H1 (cell line): ENCODE measurements at regions of chr3 and their contacts with region 1.

Region 1: DNA sequence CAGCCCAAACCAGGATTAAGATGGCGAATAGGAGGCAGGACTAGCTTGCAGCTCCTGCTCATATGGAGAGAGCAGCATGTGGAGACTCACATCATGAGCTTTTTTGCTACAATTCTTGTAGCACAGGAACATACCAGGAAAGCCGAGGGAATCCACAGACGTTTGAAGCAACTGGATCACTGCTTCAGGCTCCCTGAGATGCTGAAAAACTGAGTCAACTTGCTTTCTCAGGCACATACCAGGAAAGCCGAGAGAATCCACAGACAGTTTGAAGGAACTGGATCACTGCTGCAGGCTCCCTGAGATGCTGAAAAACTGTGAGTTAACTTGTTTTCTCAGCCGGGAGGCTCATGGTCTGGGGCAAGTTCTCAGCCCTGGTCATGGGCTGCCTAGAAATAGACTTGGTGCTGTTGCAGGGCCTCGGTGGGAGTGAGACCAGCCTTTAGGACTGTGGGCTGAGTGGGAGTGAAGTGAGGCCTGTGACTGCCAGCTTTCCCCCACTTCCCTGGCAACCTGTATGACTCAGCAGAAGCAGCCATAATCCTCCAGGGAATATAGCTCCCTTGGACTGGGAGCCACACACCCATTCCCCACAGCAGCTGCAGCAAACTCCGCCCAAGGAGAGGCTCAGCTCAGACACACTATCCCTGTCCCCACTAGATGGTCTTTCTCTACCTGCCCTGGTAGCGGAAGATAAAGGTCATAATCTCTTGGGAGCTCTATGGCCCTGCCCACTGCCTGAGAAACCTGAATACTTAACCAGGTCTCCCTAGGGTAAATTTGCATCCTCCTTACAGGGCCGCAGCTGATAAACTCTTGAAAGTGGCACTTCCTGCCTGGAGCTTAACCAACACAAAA is 51.9 kb upstream of the PFN2 start:
- DNase-seq: no peak
- H3K4me3 ChIP-seq: no peak overlapping the region
- H3K27ac ChIP-seq: no peak overlapping the region
- H3K4me1 ChIP-seq: peaks cover 0 to 8% (median 4%) of the 10 kb centered on the region in 4 experiments; a peak in 5 of 7 replicates
- H3K27me3 ChIP-seq: no peaks in the 10 kb centered on the region
- CTCF ChIP-seq: no peak
- EP300 ChIP-seq: no peak
- POLR2A ChIP-seq: no peak
- RAD21 ChIP-seq: no peak

Region 2: DNA sequence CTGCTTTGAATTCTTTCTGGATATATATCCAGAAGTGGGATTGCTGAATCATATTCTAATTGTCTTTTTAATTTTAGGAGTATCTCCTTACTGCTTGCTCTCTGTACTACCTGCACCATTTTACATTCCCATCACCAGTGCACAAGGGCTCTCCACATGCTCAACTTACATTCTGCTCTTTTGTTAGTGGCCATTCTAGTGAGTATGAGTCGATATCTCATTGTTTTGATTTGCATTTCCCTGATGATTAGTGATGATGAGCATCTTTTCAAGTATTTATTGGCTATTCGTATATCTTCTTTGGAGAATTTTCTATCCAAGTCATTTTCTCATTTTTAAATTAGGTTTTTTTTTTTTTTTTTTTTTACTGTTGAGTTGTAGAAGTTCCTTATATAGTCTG is 81.4 kb before region 1 on chr3:
- CTCF ChIA-PET with region 1: no interaction called
- POLR2A ChIA-PET with region 1: no interaction called
- DNase-seq: no peak
- H3K4me3 ChIP-seq: no peak overlapping the region
- H3K27ac ChIP-seq: no peak overlapping the region
- H3K4me1 ChIP-seq: no peaks in the 10 kb centered on the region
- H3K27me3 ChIP-seq: no peaks in the 10 kb centered on the region
- CTCF ChIP-seq: no peak
- EP300 ChIP-seq: no peak
- POLR2A ChIP-seq: no peak
- RAD21 ChIP-seq: no peak

Region 3: DNA sequence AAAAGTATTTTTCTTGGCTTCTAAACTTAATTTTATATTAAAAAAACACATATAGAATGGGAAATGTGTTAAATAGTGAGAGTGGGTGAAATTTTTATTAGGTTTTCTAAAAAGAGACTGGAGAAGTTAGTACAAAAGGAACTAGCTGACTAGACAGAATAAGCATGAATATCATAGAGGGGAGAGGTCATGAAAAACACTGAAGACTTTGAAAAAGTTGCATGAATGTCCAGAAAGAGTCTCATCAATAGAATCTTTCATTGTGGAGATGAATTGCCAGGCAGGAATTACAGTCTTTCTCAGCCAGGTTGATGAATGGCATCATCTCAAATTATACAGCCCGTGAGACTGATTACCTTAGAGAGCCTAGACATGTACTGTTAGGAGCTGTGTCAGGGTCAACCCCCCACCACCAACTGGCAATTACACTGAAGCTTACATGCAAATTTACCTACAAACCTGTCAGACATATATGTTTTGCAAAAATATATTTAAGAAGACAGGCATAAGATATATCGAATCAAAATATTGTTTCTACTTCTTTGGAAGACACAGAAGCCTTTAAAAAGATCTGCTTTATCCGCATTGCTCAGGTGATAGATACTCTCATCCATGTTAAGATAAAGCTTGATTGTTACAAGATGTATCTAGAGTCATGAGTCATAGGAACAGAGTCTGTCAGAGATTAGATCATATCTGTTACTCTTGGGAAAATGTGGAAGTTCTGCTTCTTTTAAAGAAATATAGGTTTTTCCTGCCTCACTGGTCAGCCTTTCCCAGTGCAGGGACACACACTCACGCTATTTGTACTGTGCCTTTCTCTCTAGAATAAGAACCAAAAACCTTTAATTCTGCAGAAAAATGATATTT is 17.1 kb before region 1 on chr3:
- CTCF ChIA-PET with region 1: interaction called, 12 read pairs
- POLR2A ChIA-PET with region 1: no interaction called
- DNase-seq: no peak
- H3K4me3 ChIP-seq: no peak overlapping the region
- H3K27ac ChIP-seq: no peak overlapping the region
- H3K4me1 ChIP-seq: no peaks in the 10 kb centered on the region
- H3K27me3 ChIP-seq: no peaks in the 10 kb centered on the region
- CTCF ChIP-seq: no peak
- EP300 ChIP-seq: no peak
- POLR2A ChIP-seq: no peak
- RAD21 ChIP-seq: no peak

Region 4: GRCh38 chr3:150035301-150035779 is 12.7 kb after region 1 on chr3:
- CTCF ChIA-PET with region 1: interaction called, 11 read pairs
- POLR2A ChIA-PET with region 1: interaction called, 4 read pairs
- DNase-seq: no peak
- H3K4me3 ChIP-seq: peak overlapping the region in 1 of 4 experiments; percentile 35; a peak in 1 of 8 replicates
- H3K27ac ChIP-seq: no peak overlapping the region
- H3K4me1 ChIP-seq: peaks cover 6 to 29% (median 25%) of the 10 kb centered on the region in 4 experiments; a peak in 5 of 7 replicates
- H3K27me3 ChIP-seq: peaks cover 0 to 17% (median 8%) of the 10 kb centered on the region in 4 experiments; a peak in 5 of 7 replicates
- CTCF ChIP-seq: no peak
- EP300 ChIP-seq: no peak
- POLR2A ChIP-seq: no peak
- RAD21 ChIP-seq: no peak; a peak in 1 of 4 replicates